Gastrocnemius medialis (tissue), 4 donors: ENCODE measurements at regions of chr15 and their contacts with region 1.

Region 1: DNA sequence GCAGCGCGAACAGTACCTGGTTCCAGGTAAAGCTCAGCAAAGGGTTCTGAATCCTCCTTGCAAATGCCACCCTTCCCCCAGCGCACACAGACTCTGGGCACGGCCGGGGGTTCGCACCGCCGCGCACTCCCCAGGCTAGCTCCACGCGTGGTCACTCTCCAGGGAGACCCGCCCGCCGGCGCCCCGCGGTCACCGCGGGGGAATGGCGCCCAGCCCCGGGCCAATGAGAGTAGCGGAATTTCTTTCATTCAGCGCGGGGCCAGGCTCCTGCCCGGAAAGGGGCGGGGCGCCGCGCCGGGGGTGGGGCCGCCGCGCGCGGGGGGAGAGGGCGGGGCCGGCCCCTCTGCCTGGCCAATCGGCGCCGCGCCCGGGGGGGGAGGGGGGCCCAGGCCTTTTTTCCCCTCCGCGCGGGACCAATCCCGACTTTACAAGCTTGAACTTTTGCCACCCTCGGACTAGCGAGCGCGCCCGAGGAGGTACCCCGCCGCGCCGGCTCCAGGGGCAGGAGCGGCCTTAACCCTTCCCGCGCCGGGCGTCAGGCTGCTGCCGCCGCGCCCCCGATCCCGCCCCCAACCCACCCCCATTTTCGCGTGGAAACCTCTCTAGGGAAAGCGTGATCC is 1.1 kb upstream of the SMAD6 start:
- DNase-seq: peak; percentile 92 to 96
- ATAC-seq: peak; percentile 80 to 86
- H3K4me3 ChIP-seq: peak overlapping the region; percentile 62 to 93 (median 84)
- H3K27ac ChIP-seq: peak overlapping the region; percentile 66 to 87 (median 84)
- H3K4me1 ChIP-seq: peaks cover 6 to 12% of the 10 kb centered on the region in 2 donors
- H3K27me3 ChIP-seq: peaks cover 0 to 5% (median 0%) of the 10 kb centered on the region in 3 donors
- CTCF ChIP-seq: no peak
- POLR2A ChIP-seq: peak in 1 of 2 donors; percentile 21

Region 2: GRCh38 chr15:64883997-64884511 is 1816.9 kb before region 1 on chr15:
- in situ Hi-C with region 1: no loop called
- intact Hi-C with region 1: no loop called
- DNase-seq: peak; percentile 48 to 57
- ATAC-seq: peak; percentile 63 to 73
- H3K4me3 ChIP-seq: no peak overlapping the region
- H3K27ac ChIP-seq: peak overlapping the region in 3 of 4 donors; percentile 18 to 46 (median 34)
- H3K4me1 ChIP-seq: no peaks in the 10 kb centered on the region
- H3K27me3 ChIP-seq: no peaks in the 10 kb centered on the region
- CTCF ChIP-seq: no peak
- POLR2A ChIP-seq: peak in 1 of 2 donors; percentile 10

Region 3: DNA sequence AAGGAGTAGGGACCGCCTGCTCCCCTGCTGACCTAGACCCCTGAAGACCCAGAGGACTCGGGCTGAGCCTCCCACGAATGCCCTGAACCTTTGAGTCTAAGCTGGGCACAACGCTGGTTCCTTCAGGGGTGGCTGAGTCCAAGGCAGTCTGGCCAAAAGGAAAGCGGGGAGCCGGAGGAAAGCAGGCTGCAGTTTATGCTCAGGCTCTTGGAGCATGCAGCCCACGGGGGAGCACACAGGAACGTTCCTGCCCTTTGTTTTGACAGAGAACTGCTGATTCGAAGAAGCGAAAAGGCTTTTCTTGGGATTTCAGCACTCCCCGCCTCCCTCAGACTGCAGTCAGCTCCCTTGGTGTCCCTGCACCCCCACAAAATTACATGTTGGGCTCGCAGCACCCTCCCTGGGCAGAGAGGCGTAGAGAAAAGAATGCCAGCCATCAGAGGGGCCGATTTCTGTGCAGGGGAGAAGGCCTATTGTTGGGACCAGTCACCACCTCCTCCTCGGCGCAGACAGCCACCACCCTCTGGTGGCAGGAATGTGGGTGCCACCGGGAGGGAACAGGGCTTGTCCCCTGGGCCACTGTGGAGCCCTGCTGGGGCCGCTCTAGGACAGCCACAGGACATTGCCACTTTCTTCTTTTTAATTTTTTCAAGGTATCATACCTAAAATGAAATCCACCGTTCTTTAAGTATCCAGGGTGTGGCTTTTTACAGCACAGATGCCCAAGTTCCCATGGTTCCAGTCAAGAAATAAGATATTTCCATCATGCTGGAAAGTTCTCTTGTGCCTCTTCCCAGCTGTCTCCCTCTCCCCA is 73.3 kb after region 1 on chr15:
- in situ Hi-C with region 1: no loop called
- intact Hi-C with region 1: loop called (anchors 2 kb)
- DNase-seq: peak; percentile 35 to 74
- ATAC-seq: peak; percentile 86 to 90
- H3K4me3 ChIP-seq: no peak overlapping the region
- H3K27ac ChIP-seq: peak overlapping the region in 1 of 4 donors; percentile 5
- H3K4me1 ChIP-seq: peaks cover 0 to 13% of the 10 kb centered on the region in 2 donors
- H3K27me3 ChIP-seq: no peaks in the 10 kb centered on the region
- CTCF ChIP-seq: peak; percentile 92 to 97 (median 96)
- POLR2A ChIP-seq: no peak

Region 4: DNA sequence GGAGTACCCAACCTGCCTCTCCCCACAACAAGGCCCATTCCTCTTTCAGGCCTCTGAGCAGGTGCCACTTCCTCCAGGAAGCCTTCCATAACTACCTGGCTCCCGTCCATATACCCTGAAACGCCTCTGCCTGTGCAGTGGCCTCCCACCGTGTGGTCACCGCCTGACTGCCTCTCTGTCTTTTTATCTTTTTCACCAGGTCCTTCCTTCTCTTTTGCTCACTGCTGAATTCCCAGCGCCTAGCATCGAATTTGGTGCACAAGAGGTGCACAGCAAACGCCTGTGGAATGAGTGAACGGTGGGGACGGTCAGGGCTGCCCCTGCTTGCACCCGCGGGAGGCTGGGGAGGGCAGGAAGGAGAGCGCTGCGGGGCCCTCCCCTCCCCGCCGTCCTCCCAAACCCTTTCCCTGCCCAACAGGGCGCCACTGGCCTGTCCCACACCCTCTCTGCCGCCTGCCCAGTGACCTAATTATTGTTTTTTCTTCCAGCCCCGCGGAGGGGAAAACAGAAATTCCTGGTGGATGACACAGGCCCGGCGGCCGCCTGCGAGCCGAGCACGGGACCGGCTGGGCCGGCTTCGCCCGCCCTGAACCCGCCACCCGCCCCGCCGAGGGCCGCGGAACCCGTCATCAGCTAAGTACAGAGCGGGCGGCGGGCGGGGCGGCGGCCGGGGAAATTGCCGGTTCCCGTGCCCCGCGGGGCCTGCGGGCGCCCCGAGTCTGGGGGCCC is 141.2 kb after region 1 on chr15:
- in situ Hi-C with region 1: no loop called
- intact Hi-C with region 1: loop called (anchors 1 kb)
- DNase-seq: peak; percentile 54 to 72
- ATAC-seq: peak; percentile 72 to 83
- H3K4me3 ChIP-seq: peak overlapping the region; percentile 41 to 57 (median 52)
- H3K27ac ChIP-seq: peak overlapping the region; percentile 76 to 79 (median 78)
- H3K4me1 ChIP-seq: no peaks in the 10 kb centered on the region
- H3K27me3 ChIP-seq: no peaks in the 10 kb centered on the region
- CTCF ChIP-seq: no peak
- POLR2A ChIP-seq: peak; percentile 33 to 50